Activated B cell treated with CpG ODN at 0.5 μM for 24 hours (primary cell): ENCODE measurements at regions of chr6 and their contacts with region 1.

Region 1: DNA sequence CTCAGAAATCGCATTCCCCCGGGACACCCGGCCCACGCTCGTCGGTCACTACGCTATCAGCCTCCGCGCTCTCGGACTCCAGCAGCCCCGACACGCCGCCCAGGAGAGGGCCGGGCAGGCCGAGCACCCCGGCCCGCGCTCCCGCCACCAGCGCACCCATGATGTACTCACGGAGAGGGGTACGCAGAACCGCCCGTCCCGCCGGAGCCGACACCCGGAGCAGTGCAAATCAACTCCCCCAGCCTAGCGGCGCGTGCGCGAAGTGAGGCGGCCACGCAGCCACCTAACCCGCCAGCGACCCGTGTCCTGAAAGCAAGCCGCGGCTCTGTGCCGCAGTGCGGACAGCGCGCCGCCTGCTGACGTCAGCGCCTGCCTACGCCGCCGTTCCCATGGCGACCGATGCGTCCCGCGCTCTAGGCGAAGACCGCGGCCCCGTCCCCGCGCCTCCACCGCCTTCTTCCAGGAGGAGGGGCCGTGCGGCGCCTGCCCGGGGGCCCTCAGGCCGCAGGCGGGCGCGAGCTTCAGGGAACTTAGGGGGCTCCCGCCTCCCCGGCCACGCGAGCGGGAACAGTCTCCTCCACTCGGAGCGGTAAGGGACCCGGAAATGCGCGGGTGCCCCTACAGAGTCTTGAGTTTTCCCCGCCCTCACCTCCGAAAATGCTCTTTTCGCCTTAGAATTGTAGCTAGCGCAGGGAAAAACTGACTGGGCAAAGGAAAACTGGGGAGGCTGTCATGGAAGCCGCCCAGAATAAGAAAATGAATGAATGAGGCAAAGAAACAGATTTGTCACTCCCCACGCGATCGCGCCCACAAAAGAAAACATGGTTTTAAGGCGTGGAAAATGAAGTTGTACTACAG is at the start of gene AHI1:
- DNase-seq: peak; percentile 95
- ATAC-seq: peak; percentile 91
- H3K4me3 Mint-ChIP-seq: no peak within 1 kb of the TSS
- H3K27ac Mint-ChIP-seq: no peak within 1 kb of the TSS
- H3K4me1 Mint-ChIP-seq: peaks cover 8% of the 10 kb centered on the region
- H3K27me3 Mint-ChIP-seq: no peaks in the 10 kb centered on the region
- CTCF ChIP-seq: no peak
- total RNA-seq, gene AHI1: 18.2 and 21.0 TPM in 2 replicates

Region 2: DNA sequence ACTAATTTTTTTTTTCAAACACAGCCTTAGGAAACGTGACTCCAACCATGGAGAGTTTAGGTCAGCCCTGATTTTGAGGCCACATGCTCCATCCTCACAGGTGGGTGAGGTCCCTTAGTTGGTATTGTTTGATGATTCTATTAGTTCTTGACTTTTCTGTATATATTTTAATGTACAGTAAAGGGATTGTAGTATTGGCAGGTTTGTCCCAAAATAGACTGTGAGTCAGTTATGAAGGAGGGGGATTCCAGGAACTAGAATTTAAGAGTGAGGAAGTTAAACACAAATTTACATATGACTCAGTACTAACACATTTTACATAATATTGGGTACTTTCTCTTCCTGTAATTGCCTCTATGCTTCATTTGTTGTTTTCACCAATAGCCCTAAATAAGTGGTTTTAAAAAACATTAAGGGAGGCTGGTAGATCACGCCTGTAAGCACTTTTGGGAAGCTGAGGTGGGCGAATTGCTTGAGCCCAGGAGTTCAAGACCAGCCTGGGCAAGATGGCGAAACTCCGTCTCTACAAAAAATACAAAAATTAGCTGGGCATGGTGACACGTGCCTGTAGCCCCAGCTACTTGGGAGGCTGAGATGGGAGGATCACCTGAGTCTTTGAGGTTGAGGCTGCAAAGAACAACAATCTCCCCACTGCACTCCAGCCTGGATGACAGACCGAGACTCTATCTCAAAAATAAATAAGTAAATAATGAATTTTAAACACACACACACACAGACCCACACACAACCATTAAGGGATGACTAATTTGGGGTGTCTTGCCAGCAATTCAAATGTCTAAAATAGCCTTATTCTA is 1261.5 kb before region 1 on chr6:
- CTCF ChIA-PET with region 1: no interaction called
- POLR2A ChIA-PET with region 1: no interaction called
- intact Hi-C with region 1: loop called (anchors 5 kb)
- DNase-seq: no peak
- ATAC-seq: peak; percentile 78
- H3K4me3 Mint-ChIP-seq: peak overlapping the region; percentile 59
- H3K27ac Mint-ChIP-seq: peak overlapping the region; percentile 97
- H3K4me1 Mint-ChIP-seq: peaks cover 57% of the 10 kb centered on the region
- H3K27me3 Mint-ChIP-seq: no peaks in the 10 kb centered on the region
- CTCF ChIP-seq: no peak

Region 3: GRCh38 chr6:135451693-135452092 is 45.9 kb before region 1 on chr6:
- CTCF ChIA-PET with region 1: no interaction called
- POLR2A ChIA-PET with region 1: no interaction called
- intact Hi-C with region 1: loop called (anchors 1 kb)
- DNase-seq: no peak
- ATAC-seq: peak; percentile 45
- H3K4me3 Mint-ChIP-seq: no peak overlapping the region
- H3K27ac Mint-ChIP-seq: no peak overlapping the region
- H3K4me1 Mint-ChIP-seq: peaks cover 8% of the 10 kb centered on the region
- H3K27me3 Mint-ChIP-seq: no peaks in the 10 kb centered on the region
- CTCF ChIP-seq: peak; percentile 54

Region 4: GRCh38 chr6:135535989-135536414 is 38.4 kb after region 1 on chr6:
- CTCF ChIA-PET with region 1: no interaction called
- POLR2A ChIA-PET with region 1: no interaction called
- intact Hi-C with region 1: no loop called
- DNase-seq: no peak
- ATAC-seq: no peak
- H3K4me3 Mint-ChIP-seq: no peak overlapping the region
- H3K27ac Mint-ChIP-seq: no peak overlapping the region
- H3K4me1 Mint-ChIP-seq: peaks cover 2% of the 10 kb centered on the region
- H3K27me3 Mint-ChIP-seq: peaks cover 13% of the 10 kb centered on the region
- CTCF ChIP-seq: no peak

Region 5: GRCh38 chr6:135851442-135852271 is 354.0 kb after region 1 on chr6 and contains the start of gene PDE7B:
- CTCF ChIA-PET with region 1: no interaction called
- POLR2A ChIA-PET with region 1: interaction called, 3 read pairs
- intact Hi-C with region 1: loop called (anchors 5 kb)
- DNase-seq: peak; percentile 47
- ATAC-seq: peak; percentile 97
- H3K4me3 Mint-ChIP-seq: peak within 1 kb of the TSS; percentile 83
- H3K27ac Mint-ChIP-seq: peak within 1 kb of the TSS; percentile 82
- H3K4me1 Mint-ChIP-seq: peaks cover 58% of the 10 kb centered on the region
- H3K27me3 Mint-ChIP-seq: no peaks in the 10 kb centered on the region
- CTCF ChIP-seq: no peak
- total RNA-seq, gene PDE7B: 1.5 and 1.8 TPM in 2 replicates

Region 6: DNA sequence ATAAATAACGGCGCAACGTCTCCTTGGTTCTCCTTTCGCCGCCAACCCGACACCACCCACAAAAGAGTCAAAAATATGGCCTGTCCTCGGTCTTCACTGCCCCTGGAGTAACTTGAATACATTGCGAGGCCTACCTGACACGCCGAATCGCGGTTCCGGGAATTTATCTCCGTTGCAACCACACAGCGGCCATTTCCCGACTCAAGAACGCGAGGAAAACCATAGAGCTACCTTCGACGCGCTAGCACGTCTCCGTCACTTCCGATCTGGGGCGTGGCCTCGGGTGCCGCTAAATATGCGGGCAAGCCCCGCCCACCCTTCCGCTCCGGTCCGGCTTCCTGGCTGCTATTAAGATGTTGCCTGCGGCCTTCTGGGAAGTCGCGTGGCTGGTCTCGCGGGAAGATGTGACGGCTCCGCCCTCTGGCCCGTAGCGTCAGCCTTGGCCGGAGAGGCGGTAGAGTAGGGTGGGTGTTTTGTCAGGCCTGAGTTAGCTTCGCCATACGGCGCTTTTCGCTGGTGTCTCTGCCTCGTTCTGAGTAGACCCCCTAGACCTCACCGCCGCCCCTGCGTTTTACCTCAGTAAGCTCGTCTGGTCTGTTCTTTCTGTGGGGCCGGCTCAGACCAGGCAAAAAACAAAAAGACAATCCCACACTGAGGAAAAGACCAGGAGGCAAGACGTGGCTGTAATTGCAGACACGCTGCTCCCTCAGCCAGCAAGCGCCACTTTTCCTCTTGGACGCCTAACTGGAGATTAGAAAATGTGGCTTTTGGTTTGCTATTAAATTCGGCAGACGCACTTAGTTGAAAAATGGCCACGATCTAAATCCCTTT is 792.2 kb after region 1 on chr6 and contains the start of gene BCLAF1:
- CTCF ChIA-PET with region 1: interaction called, 5 read pairs
- POLR2A ChIA-PET with region 1: interaction called, 67 read pairs
- intact Hi-C with region 1: loop called (anchors 1 kb)
- DNase-seq: peak; percentile 98
- ATAC-seq: peak; percentile 80
- H3K4me3 Mint-ChIP-seq: peak within 1 kb of the TSS; percentile 100
- H3K27ac Mint-ChIP-seq: peak within 1 kb of the TSS; percentile 100
- H3K4me1 Mint-ChIP-seq: peaks cover 49% of the 10 kb centered on the region
- H3K27me3 Mint-ChIP-seq: no peaks in the 10 kb centered on the region
- CTCF ChIP-seq: no peak
- total RNA-seq, gene BCLAF1: 253 and 259 TPM in 2 replicates

Region 7: DNA sequence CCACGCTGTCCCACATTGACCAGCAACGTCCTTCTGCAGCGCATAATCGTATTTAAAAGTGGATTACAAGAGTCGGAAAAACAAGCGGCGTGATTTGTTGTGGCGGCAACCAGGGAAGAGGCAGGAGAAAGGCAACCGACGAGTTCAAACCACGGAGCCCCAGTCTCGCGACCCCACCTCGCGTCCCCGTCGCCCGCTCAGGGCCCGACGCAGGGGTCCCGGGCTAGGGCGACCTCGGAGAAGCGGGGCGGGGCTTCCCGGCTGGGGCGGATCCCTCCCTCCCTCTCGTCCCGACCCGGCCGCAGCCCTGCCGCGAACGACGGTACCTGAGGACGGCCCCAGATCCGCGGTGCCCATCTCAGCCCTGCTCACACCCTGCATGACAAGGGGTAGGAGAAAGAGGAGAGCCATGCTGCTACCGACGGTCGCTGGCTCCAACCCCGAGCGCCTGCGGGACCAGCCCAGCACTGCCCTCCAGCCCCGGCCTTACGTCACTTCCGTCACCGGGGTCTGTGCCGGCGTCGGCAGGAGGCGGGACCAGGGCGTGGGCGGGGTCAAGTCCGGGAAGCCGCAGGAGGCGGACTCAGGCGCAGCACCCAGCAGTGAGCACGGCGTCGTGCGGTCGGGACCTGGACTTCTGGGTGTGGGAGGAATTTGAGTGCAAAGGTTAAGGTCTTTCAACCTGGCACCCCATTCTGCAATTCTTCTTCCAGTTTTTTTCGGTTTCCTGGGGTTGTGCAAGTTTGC is 1721.4 kb after region 1 on chr6 and contains the start of gene IFNGR1:
- CTCF ChIA-PET with region 1: no interaction called
- POLR2A ChIA-PET with region 1: no interaction called
- intact Hi-C with region 1: loop called (anchors 5 kb)
- DNase-seq: peak; percentile 97
- ATAC-seq: peak; percentile 85
- H3K4me3 Mint-ChIP-seq: peak within 1 kb of the TSS; percentile 99
- H3K27ac Mint-ChIP-seq: peak within 1 kb of the TSS; percentile 98
- H3K4me1 Mint-ChIP-seq: peaks cover 83% of the 10 kb centered on the region
- H3K27me3 Mint-ChIP-seq: no peaks in the 10 kb centered on the region
- CTCF ChIP-seq: no peak
- total RNA-seq, gene IFNGR1: 60.5 and 65.6 TPM in 2 replicates